Activated CD4-positive, alpha-beta T cell treated with anti-CD3 and anti-CD28 coated beads, Interleukin-2, amount 10 ng/mL, durations not matched to agents 24 days and 14 days (primary cell): ENCODE measurements at regions of chr3 and their contacts with region 1.

Region 1: GRCh38 chr3:48273594-48274211 is 32.8 kb downstream of the ZNF589 start:
- DNase-seq: peak; percentile 88
- H3K4me3 Mint-ChIP-seq: no peak overlapping the region
- H3K27ac Mint-ChIP-seq: no peak overlapping the region
- H3K4me1 Mint-ChIP-seq: peaks cover 22% of the 10 kb centered on the region
- H3K27me3 Mint-ChIP-seq: no peaks in the 10 kb centered on the region

Region 2: DNA sequence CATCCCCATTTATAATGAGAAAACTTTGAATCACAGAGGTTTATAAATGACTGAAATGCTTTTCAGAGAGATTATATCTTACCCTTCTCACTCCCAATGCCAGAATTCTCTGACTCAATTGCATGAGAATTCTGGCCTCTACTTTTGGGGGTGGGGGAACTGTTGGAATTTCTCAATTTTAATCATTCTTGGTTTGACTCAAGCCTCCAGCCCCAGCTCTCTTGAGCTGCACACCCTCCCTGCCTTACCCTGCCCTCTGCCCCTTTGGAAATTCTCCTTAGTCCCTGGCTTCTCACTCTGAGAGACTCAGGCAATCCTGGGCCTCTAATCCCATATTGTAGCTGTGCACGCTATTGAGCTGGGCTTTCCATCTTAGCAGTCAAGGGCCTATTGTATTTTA is 11.4 kb after region 1 on chr3:
- intact Hi-C with region 1: no loop called
- DNase-seq: no peak
- H3K4me3 Mint-ChIP-seq: no peak overlapping the region
- H3K27ac Mint-ChIP-seq: no peak overlapping the region
- H3K4me1 Mint-ChIP-seq: peaks cover 2% of the 10 kb centered on the region
- H3K27me3 Mint-ChIP-seq: no peaks in the 10 kb centered on the region

Region 3: DNA sequence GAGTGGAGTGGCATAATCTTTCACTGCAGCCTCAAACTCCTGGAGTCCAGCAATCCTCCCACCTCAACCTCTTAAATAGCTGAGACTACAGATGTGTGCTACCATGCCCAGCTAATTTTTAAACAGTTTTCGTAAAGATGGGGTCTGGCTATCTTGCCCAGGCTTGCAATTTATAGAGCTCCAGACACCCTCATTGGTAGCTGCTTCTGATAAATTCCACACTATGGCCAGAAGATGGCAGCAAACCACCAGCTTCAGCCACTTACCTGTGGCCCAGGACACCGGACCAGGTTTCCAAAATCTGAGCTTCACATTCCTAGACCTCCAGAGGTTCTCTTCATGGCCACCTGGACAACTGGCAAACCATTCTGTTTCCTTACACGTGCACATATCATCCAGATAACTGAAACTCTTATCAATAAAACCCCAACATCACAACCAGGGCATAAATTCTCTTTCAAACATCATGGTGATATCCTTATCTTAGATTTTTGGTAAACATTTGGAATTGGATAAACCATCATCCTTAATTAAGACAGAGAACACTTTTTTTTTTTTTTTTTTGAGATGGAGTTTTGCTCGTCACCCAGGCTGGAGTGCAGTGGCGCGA is 127.2 kb after region 1 on chr3:
- intact Hi-C with region 1: loop called (anchors 10 kb)
- DNase-seq: peak; percentile 89
- H3K4me3 Mint-ChIP-seq: no peak overlapping the region
- H3K27ac Mint-ChIP-seq: peak overlapping the region; percentile 51
- H3K4me1 Mint-ChIP-seq: peaks cover 2% of the 10 kb centered on the region
- H3K27me3 Mint-ChIP-seq: peaks cover 4% of the 10 kb centered on the region